ENCODE measurements at regions of chr15 and their contacts with region 1.

Region 1: DNA sequence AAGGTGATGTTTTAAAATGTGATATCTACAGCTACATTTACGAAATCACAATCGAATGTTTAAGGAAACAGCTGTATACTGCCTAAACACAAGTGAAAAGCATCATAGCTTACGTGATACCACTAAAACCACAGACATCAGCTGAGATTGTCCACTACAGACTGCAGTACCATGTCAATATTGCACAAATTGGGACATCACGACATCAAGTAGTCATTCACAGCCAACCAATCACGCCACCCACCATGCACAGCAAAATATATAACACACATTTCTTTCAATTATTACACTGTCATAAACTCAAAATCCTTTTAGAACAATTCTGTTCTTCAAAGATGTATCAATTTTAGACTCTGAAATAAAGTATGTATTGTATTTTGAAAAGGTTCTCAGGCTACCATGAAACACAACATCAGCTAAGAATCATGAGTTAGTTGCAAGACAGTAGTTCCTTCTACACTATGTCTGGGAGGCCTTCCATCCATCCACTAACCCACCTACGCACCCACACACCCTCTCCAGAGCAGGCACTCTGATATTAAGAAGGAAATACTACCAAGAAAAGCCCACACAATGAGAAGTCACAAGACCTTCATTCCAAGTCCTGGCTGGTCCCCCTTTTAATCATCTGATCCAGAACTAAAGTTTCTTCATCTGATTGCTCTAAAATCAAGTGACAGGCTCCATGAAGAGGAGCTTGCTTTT is 3.1 kb downstream of the DMXL2 start:
- DNase-seq: no peak
- H3K4me3 ChIP-seq: no peak overlapping the region
- H3K27ac ChIP-seq: no peak overlapping the region
- H3K4me1 ChIP-seq: no peaks in the 10 kb centered on the region
- H3K27me3 ChIP-seq: no peaks in the 10 kb centered on the region
- CTCF ChIP-seq: no peak
- POLR2A ChIP-seq: no peak

Region 2: GRCh38 chr15:51672155-51672687 is 52.7 kb after region 1 on chr15:
- intact Hi-C with region 1: loop called (anchors 10 kb)
- DNase-seq: no peak
- H3K4me3 ChIP-seq: no peak overlapping the region
- H3K27ac ChIP-seq: no peak overlapping the region
- H3K4me1 ChIP-seq: no peaks in the 10 kb centered on the region
- H3K27me3 ChIP-seq: no peaks in the 10 kb centered on the region
- CTCF ChIP-seq: no peak
- POLR2A ChIP-seq: no peak